Activated T-helper 1 cell treated with anti-CD3 and anti-CD28 coated beads, Interleukin-12 subunit alpha, Interleukin-12 subunit beta, Interleukin-2, Interleukin-4 antibody, amounts not matched to agents 30 ng/mL and 10 ng/mL and 1 ng/mL, durations not matched to agents 14 hours and 24 hours and 36 hours (primary cell): ENCODE measurements at regions of chr6 and their contacts with region 1.

Region 1: DNA sequence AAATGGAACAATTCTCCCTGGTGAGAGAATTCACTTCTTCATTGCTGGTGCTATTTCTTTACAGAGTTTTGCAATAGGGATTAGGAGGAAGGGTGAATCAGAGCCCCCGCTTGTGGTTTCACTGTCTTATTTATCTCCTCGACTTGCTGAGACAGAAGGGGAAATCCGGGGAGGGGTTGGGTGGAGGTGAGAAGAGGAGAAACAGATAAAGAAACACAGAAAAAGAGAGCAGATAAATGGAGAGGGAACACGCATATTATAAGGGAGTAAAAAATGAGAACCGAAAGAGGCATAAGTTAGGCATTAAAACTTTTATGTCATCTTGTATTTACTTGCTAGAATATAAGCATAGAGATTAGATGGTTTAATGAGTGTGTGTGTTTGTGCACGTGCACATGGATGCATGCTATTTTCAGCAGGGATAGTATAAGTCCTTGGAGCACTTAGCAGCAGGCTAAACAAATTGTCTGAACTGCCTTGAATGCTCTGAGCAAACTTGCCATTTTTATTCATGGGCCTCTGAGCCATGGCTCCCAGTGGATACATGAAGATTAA is 105.0 kb downstream of the OLIG3 start:
- DNase-seq: peak; percentile 73
- H3K4me3 Mint-ChIP-seq: peak overlapping the region; percentile 53
- H3K27ac Mint-ChIP-seq: peak overlapping the region; percentile 85
- H3K4me1 Mint-ChIP-seq: peaks cover 46% of the 10 kb centered on the region
- H3K27me3 Mint-ChIP-seq: no peaks in the 10 kb centered on the region

Region 2: DNA sequence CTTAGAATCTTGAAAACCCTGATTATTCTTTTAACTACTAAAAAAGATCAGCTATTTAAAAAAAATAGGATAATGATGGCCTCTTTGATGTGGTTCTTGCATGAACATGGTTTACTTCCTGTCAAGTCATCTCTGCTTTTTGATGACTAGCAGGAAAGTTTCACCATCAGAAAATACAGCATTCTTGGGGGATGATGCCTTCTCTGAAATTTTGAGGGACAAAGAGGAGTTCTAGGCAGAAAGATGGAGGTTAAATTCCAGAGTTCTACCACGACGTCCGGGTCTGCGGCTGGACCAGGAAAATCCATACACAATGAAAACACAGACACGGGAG is 25.5 kb before region 1 on chr6:
- intact Hi-C with region 1: loop called (anchors 1 kb)
- DNase-seq: peak; percentile 13
- H3K4me3 Mint-ChIP-seq: peak overlapping the region; percentile 45
- H3K27ac Mint-ChIP-seq: peak overlapping the region; percentile 73
- H3K4me1 Mint-ChIP-seq: peaks cover 28% of the 10 kb centered on the region
- H3K27me3 Mint-ChIP-seq: peaks cover 2% of the 10 kb centered on the region

Region 3: GRCh38 chr6:137399881-137400443 is 10.7 kb after region 1 on chr6:
- intact Hi-C with region 1: loop called (anchors 1 kb)
- DNase-seq: no peak
- H3K4me3 Mint-ChIP-seq: no peak overlapping the region
- H3K27ac Mint-ChIP-seq: peak overlapping the region; percentile 38
- H3K4me1 Mint-ChIP-seq: peaks cover 18% of the 10 kb centered on the region
- H3K27me3 Mint-ChIP-seq: no peaks in the 10 kb centered on the region

Region 4: DNA sequence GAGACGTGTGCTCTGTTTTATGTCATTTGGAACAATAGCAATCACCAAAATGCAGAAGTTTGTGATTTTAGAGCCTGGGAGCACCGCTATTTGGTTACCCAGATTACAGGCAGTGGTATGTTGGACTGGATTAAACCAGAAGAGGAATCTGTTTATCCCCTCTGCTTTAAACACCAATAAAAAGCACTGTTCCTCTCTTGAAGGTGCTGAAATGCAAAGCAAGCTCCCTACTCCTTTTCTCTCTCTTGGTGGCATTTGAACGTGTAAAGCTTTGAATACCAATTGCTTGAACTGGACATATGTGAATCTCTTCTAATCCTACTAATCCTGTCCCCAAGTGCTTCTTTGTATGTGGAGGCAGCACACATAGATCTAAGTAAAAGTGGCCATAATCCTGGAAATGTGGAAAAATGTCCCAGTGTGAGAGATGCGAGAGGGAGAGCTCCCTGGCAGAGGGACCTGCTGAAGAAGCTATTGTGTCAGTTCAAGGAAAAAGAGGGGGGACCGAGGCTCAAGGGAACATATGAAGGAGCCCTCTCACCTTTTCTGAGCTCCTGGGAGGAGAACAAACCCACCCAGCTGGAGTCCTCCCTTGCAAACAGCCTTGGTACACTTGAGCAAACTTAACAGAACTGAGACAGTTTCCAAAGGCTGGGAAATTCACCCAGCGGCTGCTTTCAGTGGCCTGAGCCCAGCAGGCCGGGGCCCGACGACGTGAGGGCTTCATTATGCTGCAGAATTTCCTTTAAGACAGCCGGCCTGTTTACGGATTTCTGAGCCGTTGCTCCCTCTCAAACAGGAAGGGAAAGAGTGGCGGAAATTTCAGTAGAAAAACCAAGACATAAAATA is 123.8 kb after region 1 on chr6:
- intact Hi-C with region 1: no loop called
- DNase-seq: no peak
- H3K4me3 Mint-ChIP-seq: no peak overlapping the region
- H3K27ac Mint-ChIP-seq: no peak overlapping the region
- H3K4me1 Mint-ChIP-seq: no peaks in the 10 kb centered on the region
- H3K27me3 Mint-ChIP-seq: peaks cover 68% of the 10 kb centered on the region